Endothelial cell of umbilical vein (primary cell): ENCODE measurements at regions of chr15 and their contacts with region 1.

Region 1: GRCh38 chr15:40344631-40345120 is 3.9 kb upstream of the CCDC9B start:
- DNase-seq: peak; percentile 36
- H3K4me3 ChIP-seq: no peak overlapping the region
- H3K27ac ChIP-seq: peak overlapping the region; percentile 96
- H3K4me1 ChIP-seq: peaks cover 41% of the 10 kb centered on the region
- H3K27me3 ChIP-seq: no peaks in the 10 kb centered on the region
- CTCF ChIP-seq: peak; percentile 74 to 88
- POLR2A ChIP-seq: no peak

Region 2: DNA sequence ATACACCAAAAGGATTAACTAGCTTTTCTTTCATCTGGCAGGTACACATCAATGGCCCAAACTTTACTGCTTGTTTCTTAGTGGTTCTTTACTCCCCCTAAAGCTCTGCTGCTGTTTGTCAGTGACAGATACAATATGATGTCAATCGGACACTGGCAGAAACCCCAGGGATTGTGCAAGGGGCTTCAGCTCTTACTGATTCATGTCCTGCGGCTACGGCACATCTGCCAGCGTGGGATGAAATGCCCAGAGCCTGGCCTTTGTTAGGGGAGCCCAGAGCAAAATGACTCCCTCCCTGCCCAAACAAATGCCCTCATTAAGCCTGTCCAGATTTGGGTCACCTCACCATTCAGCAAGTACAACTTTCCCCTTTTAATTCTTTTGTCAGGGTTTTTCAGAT is 334.0 kb before region 1 on chr15:
- CTCF ChIA-PET with region 1: no interaction called
- POLR2A ChIA-PET with region 1: no interaction called
- dilution Hi-C with region 1: no loop called
- intact Hi-C with region 1: no loop called
- DNase-seq: no peak
- H3K4me3 ChIP-seq: no peak overlapping the region
- H3K27ac ChIP-seq: no peak overlapping the region
- H3K4me1 ChIP-seq: no peaks in the 10 kb centered on the region
- H3K27me3 ChIP-seq: no peaks in the 10 kb centered on the region
- CTCF ChIP-seq: no peak
- POLR2A ChIP-seq: no peak

Region 3: DNA sequence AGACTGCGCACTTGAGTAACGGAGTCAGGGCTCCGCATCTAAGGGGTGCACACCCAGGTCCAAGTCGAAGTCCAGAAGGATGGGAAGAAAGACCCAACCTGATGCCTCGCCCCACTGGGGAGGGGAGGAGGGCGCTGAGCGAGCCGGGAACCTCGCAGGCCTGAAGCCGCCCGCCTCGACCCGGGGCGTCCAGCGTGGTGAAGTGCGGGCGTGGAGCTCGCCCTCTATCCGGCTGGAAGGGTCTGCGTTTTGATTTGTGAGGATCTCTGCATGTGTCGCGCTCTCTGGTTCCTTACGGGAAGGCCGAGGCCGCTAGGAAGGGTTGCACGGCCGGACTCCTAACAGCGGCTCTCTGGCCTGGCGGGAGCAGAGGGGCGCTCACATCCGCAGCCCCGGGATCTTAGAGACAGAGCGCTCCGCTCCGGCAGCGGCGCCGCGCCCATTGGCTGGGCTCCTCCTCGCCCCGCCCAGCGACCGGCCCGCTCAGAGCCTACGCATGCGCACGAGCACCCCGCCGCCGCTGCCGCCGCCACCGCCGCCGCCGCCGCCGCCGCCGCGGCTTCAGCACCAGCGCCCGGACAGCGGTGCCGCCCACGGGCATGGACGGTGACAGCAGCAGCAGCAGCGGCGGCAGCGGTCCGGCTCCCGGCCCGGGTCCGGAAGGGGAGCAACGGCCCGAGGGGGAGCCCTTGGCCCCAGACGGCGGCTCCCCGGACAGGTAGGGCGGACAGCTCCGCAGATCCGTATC is 13.2 kb after region 1 on chr15 and contains the start of gene DISP2:
- CTCF ChIA-PET with region 1: interaction called, 82 read pairs
- POLR2A ChIA-PET with region 1: no interaction called
- dilution Hi-C with region 1: no loop called
- intact Hi-C with region 1: no loop called
- DNase-seq: peak; percentile 84
- H3K4me3 ChIP-seq: peak within 1 kb of the TSS; percentile 35 to 54 (median 41)
- H3K27ac ChIP-seq: no peak within 1 kb of the TSS
- H3K4me1 ChIP-seq: peaks cover 8% of the 10 kb centered on the region
- H3K27me3 ChIP-seq: peaks cover 9 to 13% of the 10 kb centered on the region in 2 experiments
- CTCF ChIP-seq: no peak
- POLR2A ChIP-seq: no peak
- total RNA-seq, gene DISP2: 0.65 and 1.2 TPM in 2 replicates

Region 4: DNA sequence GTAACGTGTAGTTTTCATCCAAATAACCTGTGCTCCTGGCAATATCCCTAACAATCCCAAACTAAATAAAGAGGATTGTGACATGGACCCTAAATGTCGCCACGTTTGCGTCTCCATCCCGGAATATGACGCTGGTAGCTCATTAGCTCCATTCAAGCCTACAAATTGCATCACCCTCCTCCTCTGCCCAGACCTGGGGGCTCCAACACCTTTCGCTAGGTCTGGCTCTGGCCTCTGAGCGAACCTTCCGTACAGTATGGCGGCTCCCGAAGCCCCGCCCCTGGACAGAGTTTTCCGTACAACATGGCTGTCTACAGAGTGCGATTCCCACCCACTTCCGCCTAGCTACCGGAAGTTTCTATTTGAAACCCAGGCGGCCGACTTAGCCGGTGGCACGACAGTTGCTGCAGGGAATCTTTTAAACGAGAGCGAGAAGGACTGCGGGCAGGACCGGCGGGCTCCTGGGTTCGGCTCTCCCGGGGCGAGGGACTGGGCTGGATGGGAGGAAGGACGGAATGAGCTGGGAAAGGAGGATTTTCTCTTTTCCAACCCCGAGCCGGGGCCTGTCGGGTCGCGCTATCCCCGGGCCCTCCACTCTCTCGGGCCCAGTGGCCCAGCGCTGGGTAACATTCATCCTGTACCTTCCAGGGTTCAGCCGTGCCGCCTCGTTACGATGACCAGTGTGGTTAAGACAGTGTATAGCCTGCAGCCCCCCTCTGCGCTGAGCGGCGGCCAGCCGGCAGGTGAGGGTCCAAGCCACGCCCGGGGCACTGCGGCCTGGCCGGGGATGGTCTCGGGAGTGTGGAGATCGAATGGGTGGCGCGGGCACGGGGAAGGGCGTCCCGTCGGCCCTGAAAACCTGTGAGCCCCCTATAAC is 38.1 kb after region 1 on chr15 and contains the start of gene KNSTRN:
- CTCF ChIA-PET with region 1: interaction called, 6 read pairs
- POLR2A ChIA-PET with region 1: no interaction called
- dilution Hi-C with region 1: no loop called
- intact Hi-C with region 1: loop called (anchors 1 kb)
- DNase-seq: peak; percentile 87
- H3K4me3 ChIP-seq: peak within 1 kb of the TSS; percentile 78 to 93 (median 87)
- H3K27ac ChIP-seq: peak within 1 kb of the TSS; percentile 6
- H3K4me1 ChIP-seq: peaks cover 19% of the 10 kb centered on the region
- H3K27me3 ChIP-seq: no peaks in the 10 kb centered on the region
- CTCF ChIP-seq: no peak
- POLR2A ChIP-seq: peak; percentile 18
- total RNA-seq, gene KNSTRN: 54.9 and 61.4 TPM in 2 replicates

Region 5: DNA sequence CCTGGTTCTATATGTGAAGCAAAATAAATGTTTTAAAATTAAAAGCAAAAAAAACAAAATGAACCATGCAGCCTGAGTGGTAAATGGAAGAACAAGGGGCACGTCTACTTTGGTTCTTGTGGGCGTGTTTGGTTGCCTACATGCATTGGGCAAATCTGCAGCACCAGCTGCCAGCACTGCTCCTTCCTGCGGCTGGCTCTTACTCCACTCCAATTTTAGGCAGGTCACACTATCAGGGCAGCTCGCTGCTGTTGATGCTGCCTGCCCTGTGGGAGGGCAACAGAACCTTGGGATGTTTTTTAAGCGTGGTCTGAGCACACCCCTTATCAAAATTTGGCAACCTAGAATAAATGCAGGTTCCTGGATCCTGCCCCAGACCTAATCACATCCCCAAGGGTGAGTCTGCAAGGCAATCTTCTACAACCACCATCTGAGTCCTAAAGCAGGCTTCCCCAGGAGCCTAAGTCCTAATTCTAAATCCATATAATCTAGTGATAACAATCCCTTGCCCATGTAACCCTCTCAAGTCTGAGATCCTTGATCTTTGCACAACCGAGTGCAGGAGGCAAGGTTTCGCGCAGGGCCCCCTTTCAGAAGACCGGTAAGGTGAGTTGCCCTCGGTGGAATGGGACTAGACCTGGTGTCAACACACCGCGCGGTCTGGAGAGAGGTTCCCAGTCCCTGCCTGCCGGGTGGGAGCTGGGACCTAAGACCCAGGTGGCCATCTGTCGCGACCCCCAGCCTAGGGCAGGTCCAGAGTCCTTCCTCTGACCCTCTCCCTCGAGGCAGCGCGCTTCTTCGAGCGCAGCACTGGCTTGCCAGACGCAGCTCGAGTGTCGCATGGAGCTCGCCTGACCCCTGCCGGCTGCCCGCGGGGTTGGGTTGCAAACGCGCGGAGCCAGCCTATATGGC is 76.8 kb after region 1 on chr15:
- CTCF ChIA-PET with region 1: interaction called, 66 read pairs
- POLR2A ChIA-PET with region 1: no interaction called
- dilution Hi-C with region 1: no loop called
- intact Hi-C with region 1: loop called (anchors 1 kb)
- DNase-seq: peak; percentile 61
- H3K4me3 ChIP-seq: no peak overlapping the region
- H3K27ac ChIP-seq: no peak overlapping the region
- H3K4me1 ChIP-seq: no peaks in the 10 kb centered on the region
- H3K27me3 ChIP-seq: no peaks in the 10 kb centered on the region
- CTCF ChIP-seq: peak; percentile 89 to 99
- POLR2A ChIP-seq: peak; percentile 34

Region 6: DNA sequence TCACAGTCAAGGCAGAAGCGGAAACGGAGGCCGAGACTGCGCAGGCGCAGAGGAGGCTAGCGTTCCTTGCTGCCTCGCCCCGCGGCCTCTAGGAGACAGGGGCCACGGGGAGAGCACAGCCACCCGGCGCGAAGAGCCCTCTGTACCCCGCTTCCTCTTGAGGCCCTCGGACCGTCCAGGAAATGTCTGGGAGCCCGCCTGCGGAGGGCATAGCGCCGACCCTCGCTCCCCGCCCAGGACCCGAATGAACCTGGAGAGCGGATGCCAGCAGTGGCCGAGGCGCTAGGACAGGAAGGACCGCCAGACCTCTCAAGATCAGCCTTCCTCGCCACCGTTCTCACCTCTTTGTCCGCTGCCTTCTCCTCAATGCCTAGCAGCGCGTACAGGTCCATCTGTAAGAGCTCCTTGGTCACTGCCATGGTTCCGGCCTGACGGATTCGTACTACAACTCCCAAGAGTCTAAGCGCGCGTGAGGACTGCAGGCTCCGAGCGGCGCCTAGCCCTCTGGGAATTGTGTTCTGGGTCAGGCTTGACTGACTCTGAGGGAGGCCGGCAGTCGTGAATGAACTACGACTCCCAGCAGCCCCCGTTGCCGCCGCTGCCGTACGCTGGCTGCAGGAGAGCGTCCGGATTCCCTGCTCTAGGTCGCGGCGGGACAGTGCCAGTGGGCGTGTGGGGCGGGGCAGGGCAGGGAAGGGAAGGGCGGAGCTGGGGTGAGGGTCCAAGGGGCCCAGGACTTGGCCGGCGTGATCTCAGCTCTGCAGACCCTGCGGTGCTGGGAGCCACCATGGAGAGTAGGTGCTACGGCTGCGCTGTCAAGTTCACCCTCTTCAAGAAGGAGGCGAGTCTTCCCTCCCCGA is 462.6 kb after region 1 on chr15 and contains the starts of genes DNAJC17 and ZFYVE19:
- CTCF ChIA-PET with region 1: no interaction called
- POLR2A ChIA-PET with region 1: no interaction called
- dilution Hi-C with region 1: no loop called
- intact Hi-C with region 1: no loop called
- DNase-seq: peak; percentile 98
- H3K4me3 ChIP-seq: peak within 1 kb of the TSS; percentile 64 to 67 (median 64)
- H3K27ac ChIP-seq: peak within 1 kb of the TSS; percentile 27
- H3K4me1 ChIP-seq: peaks cover 14% of the 10 kb centered on the region
- H3K27me3 ChIP-seq: no peaks in the 10 kb centered on the region
- CTCF ChIP-seq: peak in 1 of 2 donors; percentile 3
- POLR2A ChIP-seq: peak; percentile 85
- total RNA-seq, gene DNAJC17: 42.6 and 46.4 TPM in 2 replicates
- total RNA-seq, gene ZFYVE19: 24.8 and 29.7 TPM in 2 replicates

Region 7: DNA sequence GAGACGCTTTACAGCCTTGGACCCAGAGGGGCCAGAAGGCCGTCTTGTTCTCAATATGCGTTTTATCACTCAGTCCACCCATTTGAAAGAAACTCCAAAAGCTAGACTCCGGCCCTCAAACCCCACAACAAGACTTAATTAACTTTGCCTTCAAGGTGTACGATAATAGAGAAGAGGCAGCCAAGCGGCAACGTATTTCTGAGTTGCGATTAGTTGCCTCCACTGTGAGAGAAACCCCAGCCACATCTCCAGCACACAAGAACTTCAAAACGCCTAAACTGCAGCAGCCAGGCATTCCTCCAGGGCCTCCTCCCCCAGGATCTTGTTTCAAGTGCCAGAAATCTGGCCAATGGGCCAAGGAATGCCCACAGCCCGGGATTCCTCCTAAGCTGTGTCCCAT is 788.8 kb after region 1 on chr15:
- CTCF ChIA-PET with region 1: no interaction called
- POLR2A ChIA-PET with region 1: no interaction called
- dilution Hi-C with region 1: no loop called
- intact Hi-C with region 1: no loop called
- DNase-seq: no peak
- H3K4me3 ChIP-seq: no peak overlapping the region
- H3K27ac ChIP-seq: no peak overlapping the region
- H3K4me1 ChIP-seq: no peaks in the 10 kb centered on the region
- H3K27me3 ChIP-seq: peaks cover 0 to 3% of the 10 kb centered on the region in 2 experiments
- CTCF ChIP-seq: no peak
- POLR2A ChIP-seq: no peak